ENCODE measurements at regions of chr1 and their contacts with region 1.

Region 1: GRCh38 chr1:43934101-43934985 is 742 bp downstream of the ARTN start:
- DNase-seq: peak; percentile 92
- CTCF ChIP-seq: peak; percentile 90

Region 2: DNA sequence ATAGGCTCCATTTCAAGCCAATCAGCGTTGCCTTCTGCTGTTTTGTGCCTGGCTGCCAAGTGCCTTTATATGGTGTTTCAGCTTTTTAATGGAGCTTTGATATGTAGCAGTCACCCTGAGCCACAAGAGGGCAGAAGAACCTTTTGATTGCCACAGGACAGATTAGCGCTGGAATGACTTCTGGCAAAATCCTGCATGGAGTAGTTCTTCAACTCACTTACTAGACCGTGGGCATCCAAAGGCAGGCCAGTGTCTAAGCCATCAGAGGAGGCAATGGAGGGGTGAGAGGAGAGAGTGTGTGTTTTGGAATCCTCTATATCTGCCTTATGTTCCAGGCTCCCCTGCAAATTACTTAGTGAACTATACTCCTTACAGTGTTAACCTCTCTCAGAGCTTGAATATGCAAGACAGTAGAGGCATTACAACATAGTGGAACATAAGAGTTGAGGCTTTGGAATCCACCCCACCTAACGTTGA is 170.8 kb before region 1 on chr1:
- in situ Hi-C with region 1: loop called (anchors 10 kb)
- DNase-seq: peak; percentile 63
- CTCF ChIP-seq: peak; percentile 84

Region 3: DNA sequence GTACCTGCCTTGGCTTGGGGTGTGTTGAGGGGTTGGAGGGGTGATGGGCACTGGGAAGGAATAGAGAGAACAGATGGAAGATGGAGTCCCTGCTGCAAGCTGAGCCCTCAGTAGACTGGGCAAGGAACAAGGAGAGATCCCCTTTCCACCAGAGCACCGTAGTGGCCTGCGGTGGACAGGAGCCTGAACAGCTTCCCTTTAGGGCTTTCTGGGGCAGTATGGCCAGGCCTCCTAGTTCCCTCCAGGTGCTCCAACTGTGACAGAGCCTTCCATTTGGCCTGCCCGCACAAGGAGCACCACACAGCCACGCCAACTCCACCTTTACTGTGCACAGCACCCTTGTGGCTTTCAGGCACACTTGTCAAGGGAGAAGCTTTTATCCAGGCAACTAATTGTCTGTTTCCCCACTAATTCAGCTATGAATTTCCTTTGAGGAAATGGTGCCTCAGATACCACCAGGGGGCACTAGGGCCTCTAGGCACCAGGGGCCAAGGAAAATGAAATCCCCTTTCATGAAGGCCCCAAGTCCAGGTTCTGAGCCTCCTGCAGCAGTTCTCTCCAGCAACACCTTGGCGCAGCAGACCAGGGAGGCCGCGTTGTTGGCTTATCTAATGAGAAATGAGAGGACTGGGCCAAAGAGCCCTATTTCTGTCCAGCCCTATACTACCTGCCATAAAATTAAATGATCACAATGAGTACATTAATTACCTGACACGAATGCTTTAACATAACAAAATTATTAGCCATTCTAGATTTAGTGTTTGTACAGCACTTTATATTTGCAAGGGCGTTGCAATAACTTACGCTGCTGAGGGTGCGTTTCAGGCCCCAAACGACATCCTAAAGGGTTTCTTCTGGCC is 443.8 kb after region 1 on chr1:
- in situ Hi-C with region 1: no loop called
- DNase-seq: peak; percentile 55
- CTCF ChIP-seq: peak; percentile 75